Activated CD8-positive, alpha-beta T cell treated with anti-CD3 and anti-CD28 coated beads, Interleukin-2, amount 10 ng/mL, durations not matched to agents 7 days and 5 days (primary cell): ENCODE measurements at regions of chr16 and their contacts with region 1.

Region 1: DNA sequence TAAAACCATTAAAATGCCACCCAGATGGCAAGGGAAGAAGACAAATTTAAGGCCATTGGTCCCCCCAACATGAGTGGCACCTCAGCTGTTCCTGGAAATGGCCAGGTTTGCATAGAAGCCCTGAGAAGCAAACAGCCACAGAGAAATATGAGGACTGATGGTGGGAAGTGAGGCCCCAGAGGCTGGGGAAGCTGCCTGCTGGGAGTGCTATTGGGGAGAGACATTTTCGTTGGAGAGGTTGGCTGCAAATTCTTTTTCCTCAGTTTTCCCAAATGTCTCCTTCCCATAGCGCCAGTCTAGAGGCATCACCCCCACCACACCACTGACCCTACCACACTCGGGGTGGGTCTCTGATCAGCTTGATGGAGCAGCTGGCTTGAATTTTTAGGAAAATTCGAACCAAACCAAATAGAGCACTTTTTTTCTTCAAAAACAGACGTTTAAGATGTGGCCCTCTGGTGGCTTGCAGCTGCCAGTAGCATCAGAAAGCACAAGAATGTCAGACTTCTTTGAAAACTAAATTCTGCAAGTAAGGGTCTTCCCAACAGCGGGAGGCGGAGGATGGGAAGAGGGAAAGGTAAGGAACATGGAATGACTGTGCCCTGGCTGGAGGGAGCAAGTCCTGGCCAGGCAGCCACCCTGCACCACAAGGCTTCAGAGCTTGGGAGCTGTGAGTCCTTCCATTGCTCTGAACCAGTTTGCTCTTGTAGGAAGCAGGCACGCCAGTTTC is 13.2 kb upstream of the SLC12A3 start:
- DNase-seq: no peak
- ATAC-seq: no peak
- H3K4me3 Mint-ChIP-seq: no peak overlapping the region
- H3K27ac Mint-ChIP-seq: no peak overlapping the region
- H3K4me1 Mint-ChIP-seq: peaks cover 42% of the 10 kb centered on the region
- H3K27me3 Mint-ChIP-seq: no peaks in the 10 kb centered on the region

Region 2: GRCh38 chr16:56836410-56837230 is 15.2 kb before region 1 on chr16:
- CTCF ChIA-PET with region 1: interaction called, 15 read pairs
- POLR2A ChIA-PET with region 1: no interaction called
- DNase-seq: no peak
- ATAC-seq: no peak
- H3K4me3 Mint-ChIP-seq: no peak overlapping the region
- H3K27ac Mint-ChIP-seq: no peak overlapping the region
- H3K4me1 Mint-ChIP-seq: peaks cover 11% of the 10 kb centered on the region
- H3K27me3 Mint-ChIP-seq: no peaks in the 10 kb centered on the region